Left cardiac atrium (tissue), 4 donors: ENCODE measurements at regions of chr7 and their contacts with region 1.

Region 1: GRCh38 chr7:27196287-27196767 is 3.6 kb downstream of the HOXA13 start:
- DNase-seq: peak; percentile 84
- ATAC-seq: peak in 1 of 2 donors; percentile 16

Region 2: DNA sequence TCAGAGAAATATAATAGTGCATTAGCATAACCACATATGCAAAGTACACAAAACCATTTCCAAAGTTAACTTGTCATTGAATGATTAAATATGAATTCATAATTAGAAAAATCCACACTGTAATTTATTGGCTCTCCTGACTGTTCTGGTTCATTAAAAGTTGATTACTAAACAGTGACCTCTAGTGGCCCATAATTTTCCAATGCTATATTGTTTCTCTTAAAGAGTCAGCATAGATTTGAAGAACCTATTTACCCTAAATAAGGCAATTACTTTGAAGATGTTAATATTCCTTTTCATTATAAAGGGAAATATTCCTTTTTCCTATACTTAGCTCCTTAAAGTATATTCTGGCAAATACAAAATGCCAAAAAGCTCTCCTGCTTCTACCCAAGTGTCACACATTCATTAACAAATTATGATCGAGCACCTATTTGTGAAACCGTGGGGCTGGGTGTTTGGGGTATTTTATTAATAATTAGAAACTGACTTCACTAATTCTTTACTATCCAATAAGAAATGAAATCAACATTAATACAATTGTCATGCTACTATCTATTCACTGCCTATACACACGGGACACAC is 380.1 kb after region 1 on chr7:
- intact Hi-C with region 1: loop called in 1 of 2 experiments (anchors 10 kb)
- DNase-seq: no peak
- ATAC-seq: peak; percentile 42 to 61

Region 3: GRCh38 chr7:27774717-27775328 is 578.5 kb after region 1 on chr7:
- intact Hi-C with region 1: loop called in 1 of 2 experiments (anchors 10 kb)
- DNase-seq: no peak
- ATAC-seq: no peak

Region 4: GRCh38 chr7:27921081-27921836 is 724.9 kb after region 1 on chr7:
- intact Hi-C with region 1: loop called (anchors 2 to 10 kb)
- DNase-seq: no peak
- ATAC-seq: peak; percentile 58 to 71

Region 5: DNA sequence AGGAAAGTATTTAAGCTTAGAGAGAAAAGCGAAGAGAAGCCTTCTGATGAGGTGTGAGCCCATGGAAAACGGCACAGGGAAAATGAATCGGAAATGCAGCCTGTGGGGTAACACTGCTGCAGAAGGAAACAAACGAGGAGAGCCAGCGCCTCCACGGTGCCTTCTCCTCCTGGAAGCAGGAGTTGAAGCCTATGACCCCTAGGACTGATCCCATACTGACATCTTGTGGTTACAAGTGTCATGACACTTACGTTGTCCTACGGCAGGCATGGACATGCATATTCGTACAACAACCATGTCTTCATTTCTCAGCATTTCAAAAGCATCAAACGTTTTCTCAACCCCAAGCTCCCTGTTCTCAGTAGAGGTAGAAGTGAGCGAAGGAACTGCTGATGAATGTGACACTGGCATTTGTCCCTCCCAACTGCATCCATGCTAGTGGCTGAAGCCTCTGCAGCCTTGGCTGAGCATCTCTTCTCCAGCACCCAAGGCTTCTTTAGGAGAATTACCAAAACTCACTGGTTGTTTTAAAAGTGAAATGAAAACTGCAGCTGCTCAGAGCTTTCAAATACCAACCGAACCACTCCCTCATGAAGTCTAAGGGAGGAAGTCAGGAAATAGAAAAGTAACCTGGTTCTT is 824.1 kb after region 1 on chr7:
- intact Hi-C with region 1: loop called (anchors 5 to 10 kb)
- DNase-seq: peak; percentile 58
- ATAC-seq: peak; percentile 79 to 85

Region 6: GRCh38 chr7:28096713-28097112 is 900.4 kb after region 1 on chr7:
- intact Hi-C with region 1: loop called (anchors 2 to 10 kb)
- DNase-seq: peak; percentile 47
- ATAC-seq: peak; percentile 76